ENCODE measurements at regions of chr3 and their contacts with region 1.

Region 1: DNA sequence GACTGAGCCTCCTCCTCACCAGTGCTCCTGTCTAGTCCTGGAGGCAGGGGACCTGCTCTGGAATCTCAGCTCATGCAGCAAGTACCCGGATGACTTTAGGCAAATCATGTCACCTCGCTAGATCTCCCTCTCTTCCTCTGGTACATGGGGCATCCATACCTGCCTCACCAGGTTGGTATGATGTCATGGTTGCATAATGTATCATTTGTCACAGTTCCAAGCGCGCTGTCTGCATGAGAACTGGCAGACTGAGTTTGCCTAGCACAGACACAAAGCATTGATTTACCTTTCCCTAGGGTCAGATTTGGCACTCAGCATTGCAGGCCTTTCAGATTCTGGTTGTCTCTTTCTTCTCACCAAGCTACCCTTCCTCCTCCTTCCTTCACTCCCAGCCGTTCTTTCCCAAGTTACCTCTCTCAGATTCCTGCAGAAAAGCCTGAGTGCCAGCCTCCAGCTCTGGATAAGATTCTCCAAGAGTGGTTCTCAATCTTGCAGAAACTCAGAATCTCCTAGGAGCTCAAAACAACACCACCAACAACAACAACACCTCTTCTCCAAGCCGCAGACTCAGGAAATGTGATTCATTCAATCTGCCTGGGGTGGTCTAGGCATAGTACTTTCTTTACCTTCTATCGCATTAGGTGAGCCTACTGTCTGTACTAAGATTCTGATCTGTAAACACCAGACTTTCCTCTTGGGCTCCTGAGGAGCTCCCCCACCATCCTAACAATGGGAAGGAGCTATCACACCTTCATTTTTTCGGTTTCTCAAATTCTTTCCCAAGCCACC is 29.5 kb downstream of the FAM43A start:
- DNase-seq: peak; percentile 37 to 56
- ATAC-seq: peak; percentile 88 to 98 (median 89)
- H3K4me3 ChIP-seq: no peak overlapping the region
- H3K4me3 Mint-ChIP-seq: peak overlapping the region; percentile 86
- H3K27ac ChIP-seq: peak overlapping the region; percentile 71
- H3K27ac Mint-ChIP-seq: peak overlapping the region; percentile 91 to 92
- H3K4me1 ChIP-seq: peaks cover 27% of the 10 kb centered on the region
- H3K4me1 Mint-ChIP-seq: peaks cover 24 to 29% of the 10 kb centered on the region in 2 donors
- H3K27me3 ChIP-seq: no peaks in the 10 kb centered on the region
- H3K27me3 Mint-ChIP-seq: no peaks in the 10 kb centered on the region
- CTCF ChIP-seq: no peak

Region 2: GRCh38 chr3:194769020-194769643 is 53.9 kb after region 1 on chr3:
- intact Hi-C with region 1: loop called (anchors 1 kb)
- DNase-seq: peak; percentile 83 to 97
- ATAC-seq: peak; percentile 95 to 99 (median 96)
- H3K4me3 ChIP-seq: peak overlapping the region; percentile 38
- H3K4me3 Mint-ChIP-seq: peak overlapping the region; percentile 88
- H3K27ac ChIP-seq: peak overlapping the region; percentile 66
- H3K27ac Mint-ChIP-seq: peak overlapping the region; percentile 73 to 93
- H3K4me1 ChIP-seq: peaks cover 26% of the 10 kb centered on the region
- H3K4me1 Mint-ChIP-seq: peaks cover 35% of the 10 kb centered on the region in 2 donors
- H3K27me3 ChIP-seq: no peaks in the 10 kb centered on the region
- H3K27me3 Mint-ChIP-seq: peaks cover 9 to 14% of the 10 kb centered on the region in 2 donors
- CTCF ChIP-seq: no peak

Measured in natural killer cell (primary cell).